Activated B cell treated with CpG ODN at 0.5 μM for 24 hours (primary cell): ENCODE measurements at regions of chrX and their contacts with region 1.

Region 1: GRCh38 chrX:131854581-131854980 is 168.5 kb upstream of the STK26 start:
- DNase-seq: no peak
- ATAC-seq: no peak
- H3K4me3 Mint-ChIP-seq: no peak overlapping the region
- H3K27ac Mint-ChIP-seq: no peak overlapping the region
- H3K4me1 Mint-ChIP-seq: no peaks in the 10 kb centered on the region
- H3K27me3 Mint-ChIP-seq: no peaks in the 10 kb centered on the region
- CTCF ChIP-seq: no peak

Region 2: GRCh38 chrX:132071260-132071659 is 216.7 kb after region 1 on chrX:
- CTCF ChIA-PET with region 1: interaction called, 7 read pairs
- POLR2A ChIA-PET with region 1: no interaction called
- intact Hi-C with region 1: loop called (anchors 1 kb)
- DNase-seq: no peak
- ATAC-seq: no peak
- H3K4me3 Mint-ChIP-seq: no peak overlapping the region
- H3K27ac Mint-ChIP-seq: no peak overlapping the region
- H3K4me1 Mint-ChIP-seq: no peaks in the 10 kb centered on the region
- H3K27me3 Mint-ChIP-seq: no peaks in the 10 kb centered on the region
- CTCF ChIP-seq: no peak

Region 3: GRCh38 chrX:133670383-133670782 is 1815.8 kb after region 1 on chrX:
- CTCF ChIA-PET with region 1: no interaction called
- POLR2A ChIA-PET with region 1: no interaction called
- intact Hi-C with region 1: loop called (anchors 5 kb)
- DNase-seq: no peak
- ATAC-seq: no peak
- H3K4me3 Mint-ChIP-seq: no peak overlapping the region
- H3K27ac Mint-ChIP-seq: no peak overlapping the region
- H3K4me1 Mint-ChIP-seq: no peaks in the 10 kb centered on the region
- H3K27me3 Mint-ChIP-seq: no peaks in the 10 kb centered on the region
- CTCF ChIP-seq: no peak